ENCODE measurements at regions of chr10 and their contacts with region 1.

Region 1: GRCh38 chr10:32790483-32790882 is 167.5 kb downstream of the ITGB1 start:
- DNase-seq: no peak
- H3K4me3 ChIP-seq: no peak overlapping the region
- H3K4me1 ChIP-seq: no peaks in the 10 kb centered on the region
- H3K27me3 ChIP-seq: no peaks in the 10 kb centered on the region

Region 2: DNA sequence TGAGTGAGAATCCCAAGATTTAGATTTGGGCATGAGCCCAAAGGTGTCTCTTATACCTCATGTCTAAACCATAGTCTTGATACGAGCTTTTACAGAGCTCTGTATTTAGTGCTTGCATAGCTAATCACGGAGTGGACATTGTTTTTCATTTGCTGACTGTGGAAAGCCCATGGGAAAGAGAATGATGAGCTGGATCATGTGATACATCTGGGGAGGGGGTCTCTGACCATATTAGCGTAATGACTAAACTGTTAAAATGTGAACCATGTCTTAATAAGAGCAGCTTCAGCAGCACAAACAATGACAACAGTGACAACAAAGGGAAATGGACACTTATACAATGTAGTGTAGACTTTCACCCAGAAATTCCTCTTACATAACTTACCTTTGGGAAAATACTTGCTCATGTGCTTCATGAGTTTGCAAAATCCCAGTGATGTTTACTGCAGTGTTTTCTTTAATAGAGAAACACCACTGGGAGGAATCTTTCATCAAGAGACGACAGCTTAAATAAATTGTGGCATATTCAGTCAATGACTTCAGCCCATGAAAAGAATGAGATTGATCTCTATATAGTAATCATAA is 211.5 kb after region 1 on chr10:
- in situ Hi-C with region 1: loop called (anchors 5 kb)
- DNase-seq: no peak
- H3K4me3 ChIP-seq: no peak overlapping the region
- H3K4me1 ChIP-seq: peaks cover 11% of the 10 kb centered on the region
- H3K27me3 ChIP-seq: no peaks in the 10 kb centered on the region